Activated CD4-positive, alpha-beta memory T cell treated with anti-CD3 and anti-CD28 coated beads, Interleukin-2, amount 10 ng/mL, durations not matched to agents 7 days and 5 days (primary cell): ENCODE measurements at regions of chr22 and their contacts with region 1.

Region 1: GRCh38 chr22:39395936-39396796 is 3.4 kb upstream of the TAB1 start:
- DNase-seq: no peak
- H3K4me3 Mint-ChIP-seq: no peak overlapping the region
- H3K27ac Mint-ChIP-seq: no peak overlapping the region
- H3K4me1 Mint-ChIP-seq: peaks cover 11% of the 10 kb centered on the region
- H3K27me3 Mint-ChIP-seq: no peaks in the 10 kb centered on the region

Region 2: GRCh38 chr22:39414886-39415285 is 18.7 kb after region 1 on chr22:
- CTCF ChIA-PET with region 1: interaction called, 13 read pairs
- POLR2A ChIA-PET with region 1: interaction called, 21 read pairs
- DNase-seq: no peak
- H3K4me3 Mint-ChIP-seq: no peak overlapping the region
- H3K27ac Mint-ChIP-seq: no peak overlapping the region
- H3K4me1 Mint-ChIP-seq: peaks cover 32% of the 10 kb centered on the region
- H3K27me3 Mint-ChIP-seq: no peaks in the 10 kb centered on the region

Region 3: DNA sequence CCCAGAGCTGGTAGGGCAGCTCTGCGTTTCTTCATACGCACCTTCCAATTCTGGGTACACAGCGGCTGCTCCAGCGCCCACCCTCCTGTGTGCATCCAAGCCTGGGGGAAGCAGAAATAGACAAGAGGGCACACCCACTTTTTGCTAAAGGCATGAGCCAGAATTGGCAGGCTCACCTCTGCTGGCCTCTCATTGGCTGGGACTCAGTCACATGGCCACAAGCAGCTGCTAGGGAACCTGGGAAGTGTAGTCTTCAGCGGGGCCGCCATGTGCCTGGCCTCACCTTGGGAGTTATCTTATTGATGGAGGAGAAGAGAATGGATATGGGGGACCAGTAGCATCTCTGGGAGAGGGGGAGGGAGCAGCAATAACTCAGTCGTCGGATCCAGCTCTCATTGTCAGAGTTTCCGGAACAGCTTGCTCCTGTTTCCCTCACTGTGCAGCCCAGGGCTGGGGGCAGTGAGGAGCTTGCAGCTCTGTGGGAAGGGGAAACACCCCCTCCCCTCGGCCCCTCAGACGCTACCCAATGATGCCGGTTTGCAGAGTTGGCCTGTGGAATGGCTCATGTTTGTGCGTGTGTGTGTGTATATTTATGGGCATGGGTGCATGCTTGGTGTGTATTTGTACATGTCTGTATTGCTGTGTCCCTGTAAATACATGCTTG is 94.1 kb after region 1 on chr22:
- CTCF ChIA-PET with region 1: interaction called, 10 read pairs
- POLR2A ChIA-PET with region 1: interaction called, 4 read pairs
- DNase-seq: peak; percentile 82
- H3K4me3 Mint-ChIP-seq: no peak overlapping the region
- H3K27ac Mint-ChIP-seq: no peak overlapping the region
- H3K4me1 Mint-ChIP-seq: peaks cover 14% of the 10 kb centered on the region
- H3K27me3 Mint-ChIP-seq: peaks cover 2% of the 10 kb centered on the region

Region 4: DNA sequence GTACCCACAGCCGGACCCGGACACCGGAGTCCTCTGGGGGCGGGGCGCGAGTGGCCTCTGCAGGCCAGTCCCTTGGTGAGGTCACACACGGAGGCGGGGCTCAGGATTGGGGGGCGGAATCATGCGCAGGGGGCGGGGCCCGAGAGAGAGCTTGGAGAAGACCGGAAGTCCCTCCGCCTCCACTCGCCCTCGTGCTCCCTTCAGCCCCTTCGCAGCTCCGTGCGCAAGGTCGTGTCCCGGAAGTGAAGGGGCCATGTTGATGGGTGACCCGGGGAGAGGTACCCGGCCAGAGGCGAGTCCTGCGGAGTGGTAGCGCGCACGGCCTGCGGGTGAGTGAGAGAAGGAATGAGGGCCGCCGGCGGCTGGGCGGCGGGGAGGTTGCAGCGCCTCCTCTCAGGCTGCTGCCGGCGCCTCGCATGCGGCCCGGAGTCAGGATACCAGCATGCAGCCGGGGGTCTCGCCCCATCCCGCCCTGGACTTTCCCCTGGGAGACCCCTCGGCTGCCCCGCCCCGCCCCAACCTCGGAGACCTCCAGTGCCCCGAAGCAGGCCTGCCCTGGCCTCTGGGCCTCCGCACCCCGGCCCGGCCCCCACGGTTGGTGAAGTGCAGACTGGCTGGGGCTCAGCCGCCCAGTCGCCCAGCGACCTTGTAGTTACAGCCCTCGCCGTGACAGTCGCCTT is 106.1 kb after region 1 on chr22 and contains the start of gene MIEF1:
- CTCF ChIA-PET with region 1: interaction called, 14 read pairs
- POLR2A ChIA-PET with region 1: no interaction called
- DNase-seq: peak; percentile 94
- H3K4me3 Mint-ChIP-seq: peak within 1 kb of the TSS; percentile 91
- H3K27ac Mint-ChIP-seq: peak within 1 kb of the TSS; percentile 92
- H3K4me1 Mint-ChIP-seq: peaks cover 41% of the 10 kb centered on the region
- H3K27me3 Mint-ChIP-seq: peaks cover 10% of the 10 kb centered on the region
- total RNA-seq, gene MIEF1: 32.4 to 32.6 TPM